Posterior cingulate gyrus (tissue), 11 donors: ENCODE measurements at regions of chr2 and their contacts with region 1.

Region 1: GRCh38 chr2:175372704-175373701 is 191.5 kb upstream of the ATP5MC3 start:
- DNase-seq: no peak

Region 2: DNA sequence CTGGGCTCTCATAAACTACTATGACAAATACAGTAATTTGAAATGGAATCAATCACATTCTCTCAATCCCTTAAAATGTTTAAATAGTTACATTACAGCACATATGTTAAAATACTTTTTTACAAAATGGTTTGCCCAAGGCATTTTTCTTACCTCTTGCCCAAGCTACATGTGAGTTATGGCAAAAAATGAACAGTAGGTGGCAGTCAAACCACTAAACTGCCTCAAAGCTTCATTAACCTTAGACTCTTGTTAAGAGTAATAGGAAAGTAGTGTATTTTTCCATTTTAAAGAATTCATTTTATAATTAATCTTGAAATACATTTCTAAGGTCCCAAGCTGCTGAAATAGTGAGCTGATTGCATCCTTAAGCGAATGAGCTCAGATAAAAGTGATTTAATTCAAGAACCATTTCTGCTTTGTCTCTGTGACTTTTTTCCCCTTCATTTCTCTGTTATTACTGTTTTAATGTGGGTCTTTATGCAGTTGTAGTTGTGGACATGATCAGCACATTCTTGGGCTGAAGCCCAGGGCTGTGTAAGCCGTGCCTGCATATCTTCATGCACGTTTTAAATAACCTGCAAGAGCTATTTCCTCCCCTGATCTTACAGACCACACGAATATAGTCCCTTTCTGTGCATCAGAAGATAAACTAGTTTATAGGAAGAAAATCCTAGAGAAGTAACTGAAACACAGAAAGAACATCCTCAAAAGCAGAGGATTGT is 317.3 kb after region 1 on chr2:
- intact Hi-C with region 1: loop called (anchors 5 kb)
- DNase-seq: peak in 1 of 10 donors; percentile 15